ENCODE measurements at regions of chr11 and their contacts with region 1.

Region 1: DNA sequence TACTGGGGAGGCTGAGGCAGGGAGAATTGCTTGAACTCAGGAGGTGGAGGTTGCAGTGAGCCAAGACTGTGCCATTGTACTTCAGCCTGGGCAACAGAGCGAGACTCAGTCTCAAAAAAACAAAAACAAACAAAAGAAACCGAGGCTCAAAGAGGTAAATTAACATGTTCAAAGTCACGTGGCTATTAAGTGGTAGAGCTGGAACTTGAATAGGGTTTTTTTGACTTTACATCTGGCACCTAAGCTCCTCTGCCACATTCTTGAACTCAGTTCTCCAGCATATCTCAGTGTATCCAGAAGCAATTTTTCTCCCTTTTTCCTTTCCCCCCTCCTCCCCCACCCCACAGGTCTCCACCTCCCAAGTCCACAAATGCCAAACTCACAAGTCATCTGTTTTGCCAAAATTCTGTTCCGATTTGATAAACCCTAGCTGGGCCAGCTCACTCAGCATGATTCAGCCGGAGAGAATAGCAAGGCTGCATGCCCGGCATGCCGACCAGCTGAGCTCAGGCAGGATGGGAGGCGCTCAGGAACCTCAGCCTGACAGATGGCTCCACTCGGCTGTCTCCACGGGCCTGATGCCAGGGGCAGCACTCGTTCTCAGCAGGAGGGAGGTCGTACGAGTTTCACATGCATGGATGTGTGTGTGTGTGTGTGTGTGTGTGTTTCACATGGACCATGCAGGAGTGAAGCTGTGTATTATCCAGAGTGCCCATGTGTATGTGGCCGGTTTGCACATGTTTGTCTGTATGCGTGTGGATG is 63.2 kb upstream of the RRAS2 start:
- DNase-seq: peak; percentile 98
- H3K4me3 ChIP-seq: no peak overlapping the region
- H3K27me3 ChIP-seq: no peaks in the 10 kb centered on the region
- CTCF ChIP-seq: no peak

Region 2: GRCh38 chr11:14358729-14359439 is 63.3 kb before region 1 on chr11 and contains the start of gene RRAS2:
- CTCF ChIA-PET with region 1: no interaction called
- POLR2A ChIA-PET with region 1: interaction called, 14 read pairs
- DNase-seq: no peak
- H3K4me3 ChIP-seq: peak within 1 kb of the TSS; percentile 81
- H3K27me3 ChIP-seq: no peaks in the 10 kb centered on the region
- CTCF ChIP-seq: no peak
- polyA plus RNA-seq, gene RRAS2: 29.1 and 60.6 TPM in 2 replicates

Region 3: DNA sequence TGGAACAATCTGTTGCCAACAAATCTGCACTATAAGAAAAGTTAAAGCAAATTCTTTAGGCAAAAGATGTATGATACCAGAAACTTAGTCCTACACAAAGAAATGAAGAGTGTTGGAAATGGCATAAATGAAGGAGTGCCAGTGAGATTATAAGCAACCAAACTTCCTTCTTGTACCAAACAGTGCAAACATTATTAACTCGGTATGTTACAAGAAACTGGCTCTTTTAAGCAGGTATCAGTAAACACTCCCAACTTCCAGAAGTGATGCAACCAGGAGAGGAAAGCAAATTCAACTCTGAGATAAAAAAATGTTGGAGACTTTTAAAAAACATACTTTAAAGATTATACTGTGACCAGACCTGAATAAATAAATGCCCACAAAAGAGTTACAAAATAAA is 48.9 kb after region 1 on chr11:
- CTCF ChIA-PET with region 1: no interaction called
- POLR2A ChIA-PET with region 1: interaction called, 13 read pairs
- DNase-seq: no peak
- H3K4me3 ChIP-seq: no peak overlapping the region
- H3K27me3 ChIP-seq: no peaks in the 10 kb centered on the region
- CTCF ChIP-seq: no peak